ENCODE measurements at regions of chr4 and their contacts with region 1.

Region 1: DNA sequence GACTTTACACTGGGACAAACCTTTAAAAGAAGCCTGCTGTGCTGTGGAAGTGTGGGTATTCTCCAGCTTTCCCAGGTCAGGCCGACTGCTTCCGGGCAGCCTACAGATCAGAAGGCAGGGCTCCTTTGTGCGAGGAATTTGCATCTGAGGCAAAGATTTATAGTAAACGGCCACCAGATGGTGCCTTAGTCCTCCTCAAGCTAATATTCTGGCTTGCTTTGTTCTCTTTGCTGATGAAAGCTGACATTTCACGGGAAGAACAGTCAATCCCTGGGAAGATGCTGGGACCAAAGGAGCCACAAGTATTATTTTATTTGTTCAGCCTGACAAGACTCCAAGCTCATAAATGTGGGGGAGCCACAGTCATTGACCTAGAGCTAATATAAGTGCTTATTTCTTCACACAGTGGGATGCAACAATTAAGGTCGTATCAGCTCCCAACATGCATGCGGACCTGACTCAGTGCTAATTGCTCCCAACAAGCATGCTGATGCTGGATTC is 120.7 kb upstream of the TRIM2 start:
- DNase-seq: no peak
- ATAC-seq: peak; percentile 68

Region 2: DNA sequence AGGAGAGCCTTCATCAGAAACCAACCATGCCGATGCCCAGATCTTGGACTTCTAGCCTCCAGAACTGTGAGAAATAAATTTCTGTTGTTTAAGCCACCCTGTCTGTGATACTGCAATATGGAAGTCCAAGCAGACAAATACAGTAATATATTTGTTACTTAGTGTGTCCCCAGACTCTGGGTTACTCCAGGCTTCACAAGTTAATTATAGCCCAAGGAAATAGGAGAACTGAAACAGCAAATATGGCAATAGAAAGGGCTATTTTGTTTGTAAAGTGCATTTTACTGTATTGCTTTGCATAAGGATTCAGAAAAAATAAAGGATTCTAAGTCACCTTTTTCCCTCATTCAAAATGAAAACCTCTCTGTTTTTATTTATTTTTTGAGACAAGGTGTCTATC is 319.7 kb before region 1 on chr4:
- intact Hi-C with region 1: no loop called
- DNase-seq: no peak
- ATAC-seq: no peak

Region 3: GRCh38 chr4:153127760-153128494 is 44.4 kb after region 1 on chr4:
- intact Hi-C with region 1: loop called (anchors 1 kb)
- DNase-seq: peak; percentile 92
- ATAC-seq: peak; percentile 80

Region 4: GRCh38 chr4:153241970-153242838 is 158.7 kb after region 1 on chr4:
- intact Hi-C with region 1: no loop called
- DNase-seq: no peak
- ATAC-seq: peak; percentile 55

Measured in Right ventricle myocardium inferior (tissue), 1 donor.